Gastrocnemius medialis (tissue), 4 donors: ENCODE measurements at regions of chr13 and their contacts with region 1.

Region 1: GRCh38 chr13:51452361-51453206 is at the start of gene INTS6:
- DNase-seq: peak; percentile 100
- ATAC-seq: peak; percentile 81 to 87
- H3K4me3 ChIP-seq: peak within 1 kb of the TSS; percentile 82 to 99 (median 96)
- H3K27ac ChIP-seq: peak within 1 kb of the TSS; percentile 100
- H3K4me1 ChIP-seq: peaks cover 23% of the 10 kb centered on the region in 2 donors
- H3K27me3 ChIP-seq: no peaks in the 10 kb centered on the region
- CTCF ChIP-seq: no peak
- POLR2A ChIP-seq: peak; percentile 98 to 99
- total RNA-seq, gene INTS6: 16.5 to 24.4 (median 18.0) TPM

Region 2: DNA sequence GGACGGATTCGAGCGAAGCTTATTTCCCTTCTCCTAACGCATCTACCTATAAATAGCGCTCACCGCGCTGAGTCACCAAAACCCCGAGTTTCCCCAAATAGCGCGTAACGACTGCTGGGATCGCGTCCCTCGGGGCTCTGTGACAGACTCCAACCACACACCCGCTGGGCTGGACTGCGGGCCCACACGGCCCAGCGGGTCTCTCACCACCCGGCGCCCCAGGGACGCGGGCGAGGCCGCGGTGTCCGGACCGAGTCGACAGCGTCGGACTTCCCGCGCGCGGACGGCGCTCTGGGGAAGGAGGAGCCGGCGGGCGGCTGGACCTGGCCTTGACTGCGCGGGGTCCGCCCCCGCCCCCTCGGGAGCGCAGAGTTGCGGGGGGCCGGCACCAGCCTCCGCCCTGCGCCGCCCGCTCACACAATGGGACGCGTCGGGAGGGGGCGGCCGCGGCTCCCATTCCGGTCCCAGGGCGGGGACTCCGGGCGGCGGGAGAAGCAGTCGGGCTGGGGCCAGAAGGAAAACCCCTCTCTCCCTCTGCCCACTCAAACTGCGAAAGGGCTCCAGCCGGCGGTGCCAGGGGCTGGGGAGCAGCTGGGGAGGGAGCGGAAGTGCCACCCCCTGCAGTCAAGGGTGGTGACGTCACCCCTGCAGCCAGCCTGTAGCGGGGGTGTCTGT is 1328.6 kb before region 1 on chr13:
- in situ Hi-C with region 1: no loop called
- intact Hi-C with region 1: loop called (anchors 5 kb)
- DNase-seq: peak; percentile 90 to 99
- ATAC-seq: peak; percentile 68 to 70
- H3K4me3 ChIP-seq: peak overlapping the region; percentile 84 to 99 (median 90)
- H3K27ac ChIP-seq: peak overlapping the region; percentile 98 to 100 (median 99)
- H3K4me1 ChIP-seq: peaks cover 48 to 49% of the 10 kb centered on the region in 2 donors
- H3K27me3 ChIP-seq: no peaks in the 10 kb centered on the region
- CTCF ChIP-seq: peak in 1 of 5 experiments; percentile 36
- POLR2A ChIP-seq: peak; percentile 97

Region 3: DNA sequence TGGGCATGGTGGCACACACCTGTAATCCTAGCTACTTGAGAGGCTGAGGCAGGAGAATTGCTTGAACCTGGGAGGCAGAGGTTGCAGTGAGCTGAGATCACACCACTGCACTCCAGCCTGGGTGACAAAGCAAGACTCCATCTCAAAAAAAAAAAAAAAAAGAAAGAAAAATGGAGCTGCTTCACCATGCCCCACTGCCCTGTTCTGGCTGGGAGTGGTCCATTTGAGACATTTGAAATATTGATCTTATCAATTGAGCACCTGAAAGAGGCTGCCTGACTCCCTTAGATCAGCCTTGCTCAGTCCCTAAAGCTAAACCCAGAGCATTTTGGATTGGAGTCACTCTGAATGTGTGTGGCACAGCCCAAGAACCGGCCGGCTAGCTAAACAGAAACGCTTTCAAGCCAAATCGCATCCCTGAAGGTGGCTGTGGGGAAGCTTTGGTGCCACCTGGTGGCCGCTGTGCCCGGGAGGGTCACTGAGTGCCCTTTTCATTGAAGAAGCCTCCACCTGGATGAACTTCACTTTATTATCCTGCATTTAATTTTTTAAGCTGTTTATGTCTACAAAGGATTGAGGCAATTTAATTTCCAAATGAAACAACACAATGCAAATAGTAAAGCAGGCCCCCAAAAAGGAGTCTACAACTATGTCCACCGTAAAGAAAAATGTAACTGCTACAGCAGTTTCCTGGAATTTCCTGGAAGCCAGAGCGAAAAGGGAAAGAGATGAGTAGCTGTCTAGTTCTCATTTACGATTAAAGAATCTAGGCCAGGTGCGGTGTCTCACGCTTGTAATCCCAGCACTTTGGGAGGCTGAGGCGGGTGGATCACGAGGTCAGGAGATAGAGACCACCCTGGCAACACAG is 166.2 kb before region 1 on chr13:
- in situ Hi-C with region 1: no loop called
- intact Hi-C with region 1: no loop called
- DNase-seq: peak; percentile 25 to 47
- ATAC-seq: peak; percentile 54 to 68
- H3K4me3 ChIP-seq: no peak overlapping the region
- H3K27ac ChIP-seq: no peak overlapping the region
- H3K4me1 ChIP-seq: no peaks in the 10 kb centered on the region
- H3K27me3 ChIP-seq: no peaks in the 10 kb centered on the region
- CTCF ChIP-seq: peak; percentile 57 to 92 (median 77)
- POLR2A ChIP-seq: no peak

Region 4: DNA sequence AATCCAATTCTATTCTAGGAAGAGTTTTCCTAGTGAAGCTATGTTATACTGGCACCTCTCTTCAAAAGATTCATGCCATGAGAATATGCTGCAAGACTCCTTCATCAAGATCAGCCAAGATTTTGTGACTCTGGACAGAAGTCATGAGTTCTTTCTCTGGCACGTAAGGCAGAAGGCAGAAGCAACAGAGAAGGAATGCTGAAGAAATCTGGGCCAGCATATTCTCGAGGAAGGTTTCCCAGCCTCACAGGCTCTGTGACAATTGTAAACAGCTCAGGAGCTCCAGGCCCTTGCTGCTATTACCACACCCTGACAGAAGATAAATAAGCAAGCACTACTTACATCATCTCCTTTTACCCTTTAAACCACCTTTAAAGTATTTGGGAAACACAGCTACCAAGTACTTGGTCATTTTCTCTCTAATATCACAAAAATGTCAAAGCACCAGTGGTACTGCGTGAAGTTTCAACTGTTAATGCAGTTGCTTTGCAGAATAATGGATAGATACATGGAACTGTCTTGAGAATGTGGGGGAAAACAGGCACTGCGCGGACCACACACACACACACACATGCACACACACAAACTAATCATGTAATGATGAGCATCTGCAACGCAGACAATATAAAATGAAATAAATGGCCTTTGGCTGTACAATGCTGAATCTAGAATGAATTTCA is 55.2 kb before region 1 on chr13:
- in situ Hi-C with region 1: no loop called
- intact Hi-C with region 1: loop called (anchors 1 kb)
- DNase-seq: peak; percentile 57 to 73
- ATAC-seq: peak; percentile 95 to 98
- H3K4me3 ChIP-seq: no peak overlapping the region
- H3K27ac ChIP-seq: peak overlapping the region; percentile 45 to 70 (median 62)
- H3K4me1 ChIP-seq: peaks cover 23 to 24% of the 10 kb centered on the region in 2 donors
- H3K27me3 ChIP-seq: no peaks in the 10 kb centered on the region
- CTCF ChIP-seq: no peak
- POLR2A ChIP-seq: no peak

Region 5: DNA sequence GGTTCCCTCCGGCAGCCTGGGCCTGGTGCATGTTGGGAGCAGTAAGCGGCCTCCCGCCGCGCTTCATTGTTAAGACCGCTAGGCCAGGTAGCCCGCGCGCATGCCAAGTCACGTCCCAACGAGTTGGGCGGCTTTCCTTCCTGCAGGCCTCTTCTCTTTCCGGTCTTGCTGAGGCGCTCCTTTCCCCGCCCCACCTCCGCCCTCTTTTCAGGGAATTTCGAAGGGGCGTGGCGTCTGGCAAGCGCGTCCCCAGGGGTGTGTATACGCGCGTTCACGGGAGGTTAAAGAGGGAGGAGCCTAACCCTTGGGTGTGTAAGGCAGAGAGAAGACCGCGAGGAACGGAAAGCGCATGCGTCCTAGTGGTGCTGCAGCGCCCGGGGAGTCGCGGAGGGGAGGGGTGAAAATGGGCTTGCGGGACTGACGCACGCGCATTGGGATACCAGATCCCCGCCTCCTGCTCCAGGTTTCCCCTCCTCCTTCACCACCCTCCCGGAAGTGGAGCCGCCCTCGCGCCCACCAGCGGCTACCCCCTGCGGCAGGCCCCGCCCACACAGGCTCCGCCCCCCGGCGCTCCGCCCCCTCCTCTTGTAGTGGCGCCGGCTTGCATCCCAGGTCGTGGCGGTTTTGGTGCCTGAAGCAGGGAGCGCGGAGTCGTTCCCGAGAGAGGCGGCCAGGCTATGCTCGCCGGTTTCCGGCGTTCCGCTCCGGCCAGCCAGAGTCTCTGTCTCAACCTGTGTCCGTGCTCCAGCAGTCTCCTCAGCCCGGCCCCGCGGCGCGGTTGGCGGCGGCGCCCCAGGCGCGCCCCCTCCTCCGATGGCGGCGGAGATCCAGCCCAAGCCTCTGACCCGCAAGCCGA is 131.5 kb after region 1 on chr13 and contains the start of gene WDFY2:
- in situ Hi-C with region 1: no loop called
- intact Hi-C with region 1: loop called (anchors 1 kb)
- DNase-seq: peak; percentile 100
- ATAC-seq: peak; percentile 96
- H3K4me3 ChIP-seq: peak within 1 kb of the TSS; percentile 79 to 91 (median 82)
- H3K27ac ChIP-seq: peak within 1 kb of the TSS; percentile 82 to 89 (median 85)
- H3K4me1 ChIP-seq: peaks cover 7 to 12% of the 10 kb centered on the region in 2 donors
- H3K27me3 ChIP-seq: no peaks in the 10 kb centered on the region
- CTCF ChIP-seq: peak in 2 of 5 experiments; percentile 3 to 20
- POLR2A ChIP-seq: peak; percentile 60 to 88
- total RNA-seq, gene WDFY2: 0.98 to 2.8 (median 1.7) TPM

Region 6: DNA sequence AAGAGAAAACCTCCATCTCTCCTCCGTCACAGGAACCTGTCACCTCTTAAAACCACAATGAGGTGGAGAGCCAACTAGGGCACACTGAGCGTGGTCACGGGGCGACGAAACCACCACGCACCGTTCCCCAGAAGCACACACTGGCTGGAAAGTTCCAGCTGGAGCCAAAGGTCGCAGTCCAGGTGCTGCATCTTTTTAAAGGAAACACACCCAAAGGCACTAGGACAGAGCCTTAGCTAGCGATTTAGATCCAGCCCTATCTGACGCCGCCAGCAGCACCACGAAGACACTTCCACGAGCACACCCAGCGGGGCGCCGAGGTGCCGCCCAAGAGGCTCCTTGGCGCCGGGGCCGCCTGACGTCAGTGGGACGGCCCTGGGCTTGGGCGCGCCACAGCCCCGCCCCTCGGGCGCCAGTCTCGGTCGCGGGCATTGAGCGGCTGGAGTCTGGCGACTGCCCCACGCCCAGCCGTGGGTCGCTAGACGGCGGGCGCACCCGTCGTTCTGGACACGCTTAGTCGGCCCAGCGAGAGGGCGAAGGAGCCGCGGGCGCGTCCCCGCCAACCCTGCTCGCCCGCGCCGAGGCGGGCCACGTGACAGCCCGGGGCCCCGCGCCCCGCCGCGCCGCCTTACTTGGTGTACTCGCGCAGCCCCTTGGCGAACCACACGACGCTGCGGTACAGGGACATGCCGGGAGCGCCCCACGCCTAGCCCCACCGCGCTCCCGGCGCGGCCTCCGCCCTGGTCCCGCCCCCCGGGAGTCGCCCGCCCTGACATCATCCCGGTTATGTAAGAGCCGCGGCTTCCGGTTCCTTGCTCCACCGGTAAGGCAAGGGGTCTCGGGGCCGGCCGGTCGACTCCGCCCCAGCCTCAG is 351.1 kb after region 1 on chr13 and contains the start of gene DHRS12:
- in situ Hi-C with region 1: loop called in 1 of 4 experiments (anchors 25 kb)
- intact Hi-C with region 1: loop called (anchors 1 kb)
- DNase-seq: peak; percentile 68 to 85
- ATAC-seq: peak; percentile 81 to 87
- H3K4me3 ChIP-seq: peak within 1 kb of the TSS; percentile 74 to 99 (median 86)
- H3K27ac ChIP-seq: peak within 1 kb of the TSS; percentile 89 to 100 (median 96)
- H3K4me1 ChIP-seq: peaks cover 37 to 46% of the 10 kb centered on the region in 2 donors
- H3K27me3 ChIP-seq: no peaks in the 10 kb centered on the region
- CTCF ChIP-seq: peak in 1 of 5 experiments; percentile 4
- POLR2A ChIP-seq: peak; percentile 90 to 93
- total RNA-seq, gene DHRS12: 1.8 to 6.0 (median 4.7) TPM

Region 7: GRCh38 chr13:52194184-52194868 is 741.7 kb after region 1 on chr13:
- in situ Hi-C with region 1: no loop called
- intact Hi-C with region 1: loop called (anchors 10 kb)
- DNase-seq: peak; percentile 69 to 81
- ATAC-seq: peak; percentile 93 to 94
- H3K4me3 ChIP-seq: peak overlapping the region; percentile 74 to 98 (median 88)
- H3K27ac ChIP-seq: peak overlapping the region; percentile 81 to 88 (median 87)
- H3K4me1 ChIP-seq: peaks cover 11 to 25% of the 10 kb centered on the region in 2 donors
- H3K27me3 ChIP-seq: no peaks in the 10 kb centered on the region
- CTCF ChIP-seq: no peak
- POLR2A ChIP-seq: peak in 1 of 2 donors; percentile 22

Region 8: GRCh38 chr13:52652196-52652979 is 1199.8 kb after region 1 on chr13 and contains the start of gene SUGT1:
- in situ Hi-C with region 1: no loop called
- intact Hi-C with region 1: loop called (anchors 1 kb)
- DNase-seq: peak; percentile 95 to 97
- ATAC-seq: peak; percentile 96
- H3K4me3 ChIP-seq: peak within 1 kb of the TSS; percentile 69 to 97 (median 82)
- H3K27ac ChIP-seq: peak within 1 kb of the TSS; percentile 92 to 98 (median 98)
- H3K4me1 ChIP-seq: peaks cover 26 to 30% of the 10 kb centered on the region in 2 donors
- H3K27me3 ChIP-seq: no peaks in the 10 kb centered on the region
- CTCF ChIP-seq: peak; percentile 60 to 75 (median 68)
- POLR2A ChIP-seq: peak; percentile 64 to 77
- total RNA-seq, gene SUGT1: 37.5 to 48.5 (median 40.1) TPM